ENCODE measurements at regions of chr3 and their contacts with region 1.

Region 1: GRCh38 chr3:163614886-163615285 is 1463.4 kb downstream of the SI start:
- DNase-seq: no peak
- H3K4me3 ChIP-seq: no peak overlapping the region
- H3K27ac ChIP-seq: no peak overlapping the region
- H3K4me1 ChIP-seq: no peaks in the 10 kb centered on the region
- H3K27me3 ChIP-seq: no peaks in the 10 kb centered on the region
- CTCF ChIP-seq: no peak
- POLR2A ChIP-seq: no peak

Region 2: GRCh38 chr3:163601426-163601825 is 13.5 kb before region 1 on chr3:
- CTCF ChIA-PET with region 1: no interaction called
- POLR2A ChIA-PET with region 1: no interaction called
- dilution Hi-C with region 1: no loop called
- intact Hi-C with region 1: no loop called
- DNase-seq: no peak
- H3K4me3 ChIP-seq: no peak overlapping the region
- H3K27ac ChIP-seq: no peak overlapping the region
- H3K4me1 ChIP-seq: no peaks in the 10 kb centered on the region
- H3K27me3 ChIP-seq: no peaks in the 10 kb centered on the region
- CTCF ChIP-seq: no peak
- POLR2A ChIP-seq: no peak

Region 3: DNA sequence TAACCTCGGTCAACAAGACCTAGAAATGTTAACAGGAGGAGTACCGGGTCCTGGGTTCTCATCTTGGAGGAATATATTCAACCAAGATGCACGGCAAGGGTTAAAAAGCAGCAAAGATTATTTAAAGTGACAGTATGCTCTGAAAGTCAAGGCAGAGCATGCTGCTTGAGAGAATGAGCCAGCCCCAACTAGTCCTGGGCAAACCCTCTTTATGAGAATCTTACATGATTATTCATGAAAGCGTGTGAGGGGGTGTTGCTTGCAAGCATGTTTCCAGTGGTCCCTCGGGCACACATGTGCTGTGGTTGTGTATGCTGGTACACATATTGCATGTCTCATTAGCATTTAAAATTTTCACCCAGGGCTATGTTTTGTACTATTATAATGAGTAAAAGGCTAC is 17.8 kb after region 1 on chr3:
- CTCF ChIA-PET with region 1: no interaction called
- POLR2A ChIA-PET with region 1: no interaction called
- dilution Hi-C with region 1: no loop called
- intact Hi-C with region 1: loop called (anchors 1 kb)
- DNase-seq: no peak
- H3K4me3 ChIP-seq: no peak overlapping the region
- H3K27ac ChIP-seq: no peak overlapping the region
- H3K4me1 ChIP-seq: no peaks in the 10 kb centered on the region
- H3K27me3 ChIP-seq: no peaks in the 10 kb centered on the region
- CTCF ChIP-seq: no peak
- POLR2A ChIP-seq: no peak

Region 4: GRCh38 chr3:164040991-164041390 is 426.1 kb after region 1 on chr3:
- CTCF ChIA-PET with region 1: no interaction called
- POLR2A ChIA-PET with region 1: no interaction called
- dilution Hi-C with region 1: no loop called
- intact Hi-C with region 1: no loop called
- DNase-seq: no peak
- H3K4me3 ChIP-seq: no peak overlapping the region
- H3K27ac ChIP-seq: no peak overlapping the region
- H3K4me1 ChIP-seq: no peaks in the 10 kb centered on the region
- H3K27me3 ChIP-seq: no peaks in the 10 kb centered on the region
- CTCF ChIP-seq: no peak
- POLR2A ChIP-seq: no peak